ENCODE measurements at regions of chr7 and their contacts with region 1.

Region 1: DNA sequence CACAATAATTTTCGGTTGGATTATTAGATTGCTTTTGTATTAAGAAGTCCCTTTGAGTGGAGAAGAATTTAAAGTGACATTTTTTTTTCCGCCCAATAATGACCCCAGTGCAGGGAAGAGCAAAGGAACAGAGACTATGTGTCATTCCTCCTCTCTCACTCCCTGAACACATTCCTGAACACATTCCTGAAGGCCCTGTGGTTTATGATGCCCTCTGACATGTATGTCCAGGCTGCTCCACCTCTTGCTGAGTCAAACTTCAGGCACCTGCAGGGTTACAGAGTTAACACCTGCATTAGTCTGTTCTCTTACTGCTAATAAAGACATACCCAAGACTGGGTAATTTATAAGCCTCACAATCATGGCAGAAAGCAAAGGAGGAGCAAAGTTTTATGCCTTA is 704.0 kb upstream of the LRRN3 start:
- DNase-seq: peak; percentile 81 to 96
- H3K4me3 ChIP-seq: no peak overlapping the region
- H3K27ac ChIP-seq: peak overlapping the region; percentile 76
- H3K4me1 ChIP-seq: peaks cover 21% of the 10 kb centered on the region
- H3K27me3 ChIP-seq: no peaks in the 10 kb centered on the region
- CTCF ChIP-seq: no peak

Region 2: DNA sequence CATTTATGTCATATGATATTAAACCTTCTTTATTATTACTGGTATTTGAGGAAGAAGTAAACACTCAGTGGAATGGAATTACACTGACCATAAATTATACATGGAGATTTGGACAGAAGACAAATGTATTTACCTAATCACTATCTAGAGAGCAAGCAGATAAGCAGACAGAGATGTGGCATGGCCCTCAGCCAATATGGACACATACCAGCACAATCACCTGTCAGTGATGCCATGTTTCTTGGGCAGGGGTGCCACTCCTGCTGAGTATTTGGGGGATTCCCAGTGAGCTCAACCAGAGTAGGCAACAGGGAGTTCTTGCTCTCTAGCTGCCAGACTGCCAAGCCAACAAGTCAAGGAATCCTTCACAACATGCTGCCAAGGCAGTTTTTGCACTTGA is 162.3 kb before region 1 on chr7:
- CTCF ChIA-PET with region 1: no interaction called
- POLR2A ChIA-PET with region 1: no interaction called
- intact Hi-C with region 1: loop called (anchors 10 kb)
- DNase-seq: peak; percentile 44 to 59
- H3K4me3 ChIP-seq: no peak overlapping the region
- H3K27ac ChIP-seq: no peak overlapping the region
- H3K4me1 ChIP-seq: 0 out of 2 replicates have a peak, but pooled peaks cover 7% of the 10 kb centered on the region
- H3K27me3 ChIP-seq: no peaks in the 10 kb centered on the region
- CTCF ChIP-seq: no peak

Region 3: DNA sequence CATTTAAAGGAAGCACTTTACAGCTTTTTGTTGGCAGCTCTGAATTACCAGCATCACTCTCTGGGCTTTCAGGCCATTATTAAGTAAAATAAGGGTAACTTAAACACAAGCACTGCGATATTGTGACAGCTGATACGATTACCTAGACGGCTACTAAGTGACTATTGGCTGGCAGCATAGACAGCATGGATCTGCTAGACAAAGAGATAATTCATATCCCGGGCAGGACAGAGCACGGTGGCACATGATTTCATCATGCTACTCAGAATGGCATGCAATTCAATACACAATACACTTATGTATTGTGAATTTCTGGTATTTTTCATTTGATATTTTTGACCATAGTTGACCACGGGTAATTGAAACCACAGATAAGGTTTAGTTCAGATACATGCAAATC is 182.0 kb after region 1 on chr7:
- CTCF ChIA-PET with region 1: no interaction called
- POLR2A ChIA-PET with region 1: no interaction called
- intact Hi-C with region 1: no loop called
- DNase-seq: no peak
- H3K4me3 ChIP-seq: no peak overlapping the region
- H3K27ac ChIP-seq: no peak overlapping the region
- H3K4me1 ChIP-seq: peaks cover 7% of the 10 kb centered on the region
- H3K27me3 ChIP-seq: no peaks in the 10 kb centered on the region
- CTCF ChIP-seq: no peak

Measured in PC-9 (cell line).